ENCODE measurements at regions of chr2 and their contacts with region 1.

Region 1: DNA sequence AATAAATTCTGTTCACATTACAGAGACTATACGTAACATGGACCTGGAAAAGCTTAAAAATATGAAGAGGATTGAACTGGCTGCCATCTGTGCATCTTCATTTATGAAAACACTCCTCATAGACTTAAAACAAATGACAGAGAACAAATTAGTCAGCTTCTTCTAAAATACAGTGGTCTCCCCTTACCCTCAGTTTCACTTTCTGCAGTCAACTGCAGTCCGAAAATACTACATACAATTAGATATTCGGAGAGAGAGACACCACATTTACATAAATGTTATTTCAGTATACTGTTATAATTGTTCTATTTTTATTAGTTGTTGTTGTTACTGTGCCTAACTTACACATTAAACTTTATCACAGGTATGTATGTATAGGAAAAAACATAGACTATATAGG is 6.5 kb downstream of the RNF103 start:
- DNase-seq: no peak
- H3K4me3 ChIP-seq: no peak overlapping the region
- H3K27ac ChIP-seq: no peak overlapping the region
- H3K4me1 ChIP-seq: peaks cover 5% of the 10 kb centered on the region
- H3K27me3 ChIP-seq: no peaks in the 10 kb centered on the region
- CTCF ChIP-seq: no peak

Region 2: DNA sequence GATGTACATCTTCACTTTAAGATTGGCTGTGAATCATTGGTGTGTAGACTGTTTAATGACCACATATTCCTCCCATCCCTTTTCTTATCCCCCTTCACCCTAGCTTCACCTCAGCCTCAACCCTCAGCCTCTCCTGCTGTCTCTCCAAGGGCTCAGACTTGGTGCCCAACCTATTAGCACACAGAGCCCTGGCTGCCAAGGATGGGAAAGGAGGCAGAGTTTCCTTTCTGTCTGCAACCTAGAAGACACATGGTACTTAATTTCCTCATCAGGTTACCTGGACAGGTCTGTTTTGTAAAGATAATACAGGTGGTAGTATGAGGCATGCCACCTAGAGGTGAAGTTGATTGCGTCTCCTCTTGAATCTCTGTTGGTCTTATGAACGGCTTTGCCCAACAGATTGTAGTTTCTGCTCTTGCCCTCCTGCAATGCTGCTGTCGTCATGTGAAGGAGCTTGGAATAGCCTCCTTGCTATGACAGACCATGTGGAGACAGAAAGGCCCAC is 58.4 kb after region 1 on chr2:
- intact Hi-C with region 1: loop called (anchors 10 kb)
- DNase-seq: peak; percentile 31
- H3K4me3 ChIP-seq: no peak overlapping the region
- H3K27ac ChIP-seq: no peak overlapping the region
- H3K4me1 ChIP-seq: peaks cover 7% of the 10 kb centered on the region
- H3K27me3 ChIP-seq: no peaks in the 10 kb centered on the region
- CTCF ChIP-seq: peak; percentile 27

Region 3: GRCh38 chr2:86750240-86750839 is 133.2 kb after region 1 on chr2:
- intact Hi-C with region 1: loop called (anchors 10 kb)
- DNase-seq: no peak
- H3K4me3 ChIP-seq: no peak overlapping the region
- H3K27ac ChIP-seq: no peak overlapping the region
- H3K4me1 ChIP-seq: peaks cover 10% of the 10 kb centered on the region
- H3K27me3 ChIP-seq: no peaks in the 10 kb centered on the region
- CTCF ChIP-seq: no peak

Region 4: GRCh38 chr2:86808315-86809161 is 191.4 kb after region 1 on chr2:
- intact Hi-C with region 1: no loop called
- DNase-seq: peak; percentile 93
- H3K4me3 ChIP-seq: peak overlapping the region; percentile 34
- H3K27ac ChIP-seq: no peak overlapping the region
- H3K4me1 ChIP-seq: no peaks in the 10 kb centered on the region
- H3K27me3 ChIP-seq: peaks cover 17% of the 10 kb centered on the region
- CTCF ChIP-seq: peak; percentile 90